Left colon (tissue), 2 donors: ENCODE measurements at regions of chr18 and their contacts with region 1.

Region 1: GRCh38 chr18:58776084-58776483 is 88.6 kb upstream of the ZNF532 start:
- DNase-seq: no peak
- ATAC-seq: no peak

Region 2: GRCh38 chr18:58590839-58591238 is 185.2 kb before region 1 on chr18:
- intact Hi-C with region 1: no loop called
- DNase-seq: no peak
- ATAC-seq: no peak

Region 3: DNA sequence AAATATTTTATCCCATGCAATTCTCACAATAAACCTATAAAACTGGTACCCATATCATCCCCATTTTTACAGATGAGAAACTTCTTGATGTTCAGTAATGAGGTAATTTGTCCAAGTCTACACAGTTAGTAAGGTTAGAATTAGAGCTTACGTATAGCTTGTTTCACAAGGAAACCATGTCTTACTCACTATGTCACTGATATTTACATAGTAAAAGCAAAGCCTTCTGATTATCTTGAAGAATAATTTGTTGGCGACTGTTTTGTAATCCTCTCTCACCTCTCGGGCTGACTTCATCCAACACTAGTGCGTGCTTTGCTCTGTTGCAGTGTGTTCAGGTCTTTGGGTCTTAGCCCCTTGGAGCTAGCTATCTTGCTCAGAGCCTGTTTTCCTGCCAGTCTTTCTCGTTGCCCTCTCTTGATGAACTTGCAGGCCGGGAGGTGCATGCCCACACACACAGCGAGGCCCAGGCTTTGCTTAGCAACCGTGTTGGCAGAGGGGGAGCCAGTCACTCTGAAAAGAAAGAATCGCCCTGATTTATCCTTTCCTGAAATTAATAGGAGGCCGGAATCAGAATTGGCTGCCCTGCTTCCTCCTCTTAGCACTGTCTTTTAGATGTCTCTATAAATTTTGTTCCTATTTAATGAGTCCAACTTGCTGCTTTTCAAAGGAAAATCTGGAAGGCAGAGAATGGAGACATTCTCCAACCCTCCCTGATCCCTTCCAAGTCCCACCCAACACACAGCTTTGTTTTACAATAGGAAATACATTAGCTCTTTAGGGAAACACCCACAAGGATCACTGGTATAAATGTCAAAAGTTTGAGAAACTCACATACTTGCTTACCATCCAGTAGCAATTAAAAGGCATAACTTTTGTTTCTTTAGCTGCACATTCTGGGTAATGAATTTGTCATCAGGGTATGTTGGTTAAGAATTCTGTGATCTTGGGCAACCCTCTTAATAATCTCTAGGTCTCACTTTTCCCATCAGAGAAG is 266.0 kb after region 1 on chr18:
- intact Hi-C with region 1: no loop called
- DNase-seq: no peak
- ATAC-seq: no peak

Region 4: DNA sequence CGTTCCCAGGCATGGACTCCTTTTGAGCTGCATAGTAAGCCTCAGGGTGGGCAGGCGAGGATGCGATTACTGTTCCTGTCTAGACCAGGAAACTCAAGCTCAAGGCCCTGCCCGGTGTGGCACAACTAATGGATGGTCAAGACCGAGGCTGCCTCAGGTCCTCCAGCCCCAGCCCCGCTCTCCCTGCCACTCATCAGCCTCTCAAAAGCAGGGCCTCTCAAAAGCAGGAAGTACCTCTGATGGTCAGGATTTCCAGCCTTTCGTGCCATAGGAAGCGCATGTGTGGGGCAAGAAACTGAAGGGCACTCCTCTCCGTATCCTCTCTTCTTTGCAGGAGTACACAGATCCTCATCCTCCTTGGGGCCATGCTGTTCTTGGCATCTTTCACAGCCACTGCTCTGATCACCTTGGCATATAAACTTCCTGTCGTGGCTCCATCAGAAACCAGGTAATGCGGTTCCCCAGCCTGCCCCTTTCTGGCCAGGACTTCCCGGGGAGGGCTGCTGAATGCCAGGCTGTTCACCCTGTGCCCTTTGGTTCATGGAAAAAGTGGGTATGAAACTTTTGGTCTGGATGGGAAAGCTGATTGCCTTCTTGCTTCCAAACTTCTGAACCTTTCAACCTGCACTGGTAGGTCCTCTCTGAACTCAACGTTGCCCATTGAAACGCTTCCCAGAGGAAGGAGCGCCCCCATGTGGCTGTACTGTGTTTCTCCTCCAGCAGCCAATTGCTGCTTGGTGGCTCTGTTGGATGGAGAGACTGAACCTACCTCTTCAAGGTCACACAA is 280.8 kb after region 1 on chr18:
- intact Hi-C with region 1: loop called (anchors 5 kb)
- DNase-seq: peak; percentile 59 to 81
- ATAC-seq: peak; percentile 72